GM18951 (cell line): ENCODE measurements at regions of chr11 and their contacts with region 1.

Region 1: GRCh38 chr11:27485930-27486773 is 13.6 kb upstream of the LGR4 start:
- POLR2A ChIP-seq: no peak

Region 2: DNA sequence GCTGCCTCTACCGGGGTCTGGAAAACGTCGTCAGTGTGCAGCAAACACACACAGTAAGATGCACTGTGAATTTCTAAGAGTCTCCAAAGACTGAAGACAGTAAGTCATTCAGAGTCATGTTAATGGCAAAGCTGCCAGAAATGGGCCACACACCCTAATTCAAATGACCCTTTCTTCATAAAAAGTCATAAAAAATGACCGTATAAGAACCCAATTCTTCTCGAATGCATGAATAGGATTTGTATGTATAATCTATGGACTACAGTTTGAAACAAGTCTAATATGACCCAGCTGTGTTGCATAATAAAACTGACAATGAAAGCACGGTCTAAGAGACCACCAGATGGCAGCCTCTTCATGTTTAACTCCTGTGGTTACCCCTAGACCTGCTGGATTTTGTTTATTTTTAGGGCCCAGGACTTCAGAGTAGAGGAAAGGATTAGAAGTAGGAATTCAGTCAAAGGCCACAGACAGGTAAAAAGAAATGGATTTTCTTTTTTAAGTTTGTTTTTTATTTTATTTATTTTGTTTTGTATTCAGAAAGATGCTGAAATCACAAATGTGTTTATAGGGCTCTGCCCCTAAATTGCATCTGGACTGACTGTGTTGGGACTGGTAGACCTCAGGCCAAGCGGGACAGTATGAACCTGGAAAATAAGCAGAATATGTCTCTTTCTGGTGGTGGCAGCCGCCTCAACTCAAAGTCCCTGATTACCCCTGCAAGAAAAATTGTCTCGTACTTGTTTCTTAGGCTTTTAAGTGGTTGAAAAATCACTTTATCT is 732.2 kb before region 1 on chr11:
- in situ Hi-C with region 1: loop called (anchors 25 kb)
- POLR2A ChIP-seq: no peak